ENCODE measurements at regions of chr6 and their contacts with region 1.

Region 1: DNA sequence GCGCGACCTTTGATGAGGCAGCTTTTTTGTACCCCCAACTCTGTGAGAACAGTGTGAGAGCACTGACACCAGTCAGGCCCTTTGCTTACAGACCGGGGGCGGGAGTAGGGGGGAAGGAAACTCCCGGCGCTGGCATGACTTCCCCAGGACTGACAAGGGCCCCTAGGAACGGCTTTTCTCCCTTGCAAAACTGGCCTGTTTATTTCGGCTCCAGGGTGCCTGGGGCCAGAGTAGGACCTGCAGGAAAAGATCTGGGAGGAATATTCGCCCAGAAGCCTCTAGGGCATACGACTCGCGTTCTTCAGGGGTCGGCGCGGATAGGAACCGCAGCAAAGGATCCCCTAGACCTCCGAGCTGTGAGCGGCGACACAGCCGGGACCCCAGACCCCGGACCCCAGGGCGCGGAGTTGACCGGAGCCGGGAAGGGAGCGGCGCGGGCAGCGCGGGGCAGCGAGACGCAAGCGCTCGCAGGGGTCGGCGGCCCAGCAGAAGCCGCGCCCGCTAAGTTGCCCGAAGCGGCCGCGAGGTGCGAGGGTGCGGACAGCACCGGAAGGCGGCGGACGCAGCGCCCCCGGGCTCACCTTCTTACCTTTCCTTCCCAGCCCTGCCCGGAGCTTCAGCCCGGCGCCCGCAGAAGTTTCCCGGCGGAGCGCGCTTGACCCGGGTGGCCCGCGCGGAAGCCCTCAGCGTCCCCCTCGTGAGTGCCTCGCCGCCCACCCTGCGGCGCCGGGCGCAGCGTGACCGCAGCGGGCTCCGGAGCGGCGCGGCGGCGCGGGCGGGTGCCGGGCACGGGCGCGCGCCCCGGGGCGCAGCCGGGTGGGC is at the start of gene POPDC3:
- DNase-seq: no peak
- H3K4me3 ChIP-seq: peak within 1 kb of the TSS; percentile 41 to 42 (median 41)
- H3K27ac ChIP-seq: no peak within 1 kb of the TSS
- H3K4me1 ChIP-seq: peaks cover 15% of the 10 kb centered on the region
- H3K27me3 ChIP-seq: peaks cover 0 to 2% of the 10 kb centered on the region in 2 experiments
- CTCF ChIP-seq: peak in 1 of 2 donors; percentile 1
- POLR2A ChIP-seq: no peak
- total RNA-seq, gene POPDC3: 1.7 and 3.1 TPM in 2 replicates

Region 2: GRCh38 chr6:105136431-105137350 is 42.8 kb before region 1 on chr6:
- CTCF ChIA-PET with region 1: no interaction called
- POLR2A ChIA-PET with region 1: no interaction called
- dilution Hi-C with region 1: no loop called
- intact Hi-C with region 1: loop called (anchors 2 kb)
- DNase-seq: peak; percentile 55
- H3K4me3 ChIP-seq: peak overlapping the region; percentile 53 to 96 (median 76)
- H3K27ac ChIP-seq: peak overlapping the region; percentile 38
- H3K4me1 ChIP-seq: peaks cover 11% of the 10 kb centered on the region
- H3K27me3 ChIP-seq: no peaks in the 10 kb centered on the region
- CTCF ChIP-seq: peak in 1 of 2 donors; percentile 38
- POLR2A ChIP-seq: no peak

Region 3: GRCh38 chr6:105272786-105273185 is 93.3 kb after region 1 on chr6:
- CTCF ChIA-PET with region 1: no interaction called
- POLR2A ChIA-PET with region 1: no interaction called
- dilution Hi-C with region 1: no loop called
- intact Hi-C with region 1: loop called (anchors 5 kb)
- DNase-seq: peak; percentile 24
- H3K4me3 ChIP-seq: no peak overlapping the region
- H3K27ac ChIP-seq: no peak overlapping the region
- H3K4me1 ChIP-seq: no peaks in the 10 kb centered on the region
- H3K27me3 ChIP-seq: no peaks in the 10 kb centered on the region
- CTCF ChIP-seq: no peak
- POLR2A ChIP-seq: no peak

Measured in endothelial cell of umbilical vein (primary cell).